Activated CD4-positive, alpha-beta T cell treated with anti-CD3 and anti-CD28 coated beads for 36 hours (primary cell): ENCODE measurements at regions of chr7 and their contacts with region 1.

Region 1: GRCh38 chr7:94509879-94510581 is 421 bp downstream of the CASD1 start:
- DNase-seq: peak; percentile 81
- ATAC-seq: peak; percentile 77
- H3K4me3 Mint-ChIP-seq: peak overlapping the region; percentile 80
- H3K27ac Mint-ChIP-seq: peak overlapping the region; percentile 93
- H3K4me1 Mint-ChIP-seq: peaks cover 43% of the 10 kb centered on the region
- H3K27me3 Mint-ChIP-seq: no peaks in the 10 kb centered on the region

Region 2: GRCh38 chr7:94657771-94658693 is 148.0 kb after region 1 on chr7:
- CTCF ChIA-PET with region 1: interaction called, 3 read pairs
- POLR2A ChIA-PET with region 1: no interaction called
- intact Hi-C with region 1: loop called (anchors 1 kb)
- DNase-seq: peak; percentile 96
- ATAC-seq: peak; percentile 89
- H3K4me3 Mint-ChIP-seq: peak overlapping the region; percentile 67
- H3K27ac Mint-ChIP-seq: no peak overlapping the region
- H3K4me1 Mint-ChIP-seq: peaks cover 20% of the 10 kb centered on the region
- H3K27me3 Mint-ChIP-seq: peaks cover 20% of the 10 kb centered on the region